Endothelial cell of umbilical vein (primary cell): ENCODE measurements at regions of chr3 and their contacts with region 1.

Region 1: GRCh38 chr3:37765591-37766488 is 95.8 kb upstream of the CTDSPL start:
- DNase-seq: no peak
- H3K4me3 ChIP-seq: no peak overlapping the region
- H3K27ac ChIP-seq: no peak overlapping the region
- H3K4me1 ChIP-seq: no peaks in the 10 kb centered on the region
- H3K27me3 ChIP-seq: peaks cover 0 to 10% of the 10 kb centered on the region in 2 experiments
- CTCF ChIP-seq: no peak
- POLR2A ChIP-seq: no peak

Region 2: DNA sequence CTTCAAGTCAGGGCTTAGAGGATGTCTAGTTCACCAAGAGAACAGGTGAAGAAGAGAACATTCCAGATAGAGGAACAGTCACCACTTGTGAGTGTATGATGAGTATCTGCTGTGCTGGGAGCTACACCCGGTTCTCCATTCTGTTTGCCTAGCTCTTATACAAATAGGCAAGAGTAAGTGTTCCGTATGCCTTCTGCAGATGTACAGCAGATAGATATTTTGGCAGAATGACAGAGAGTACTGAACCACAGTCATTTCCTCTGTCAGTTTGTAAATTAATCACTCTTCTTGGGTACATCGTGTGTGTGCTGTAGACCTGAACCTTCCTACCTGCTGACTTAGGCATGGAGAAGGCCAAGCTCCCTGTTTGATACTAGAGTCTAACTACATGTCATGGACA is 12.4 kb before region 1 on chr3:
- CTCF ChIA-PET with region 1: no interaction called
- POLR2A ChIA-PET with region 1: no interaction called
- dilution Hi-C with region 1: no loop called
- intact Hi-C with region 1: no loop called
- DNase-seq: no peak
- H3K4me3 ChIP-seq: no peak overlapping the region
- H3K27ac ChIP-seq: no peak overlapping the region
- H3K4me1 ChIP-seq: no peaks in the 10 kb centered on the region
- H3K27me3 ChIP-seq: no peaks in the 10 kb centered on the region
- CTCF ChIP-seq: no peak
- POLR2A ChIP-seq: no peak

Region 3: GRCh38 chr3:38334142-38335055 is 568.6 kb after region 1 on chr3:
- CTCF ChIA-PET with region 1: no interaction called
- POLR2A ChIA-PET with region 1: no interaction called
- dilution Hi-C with region 1: no loop called
- intact Hi-C with region 1: loop called (anchors 5 kb)
- DNase-seq: no peak
- H3K4me3 ChIP-seq: no peak overlapping the region
- H3K27ac ChIP-seq: no peak overlapping the region
- H3K4me1 ChIP-seq: no peaks in the 10 kb centered on the region
- H3K27me3 ChIP-seq: peaks cover 4 to 6% of the 10 kb centered on the region in 2 experiments
- CTCF ChIP-seq: no peak
- POLR2A ChIP-seq: no peak